BJ (cell line): ENCODE measurements at regions of chr1 and their contacts with region 1.

Region 1: GRCh38 chr1:14945132-14946016 is 208.2 kb upstream of the TMEM51 start:
- DNase-seq: peak; percentile 89
- H3K4me3 ChIP-seq: peak overlapping the region; percentile 31
- H3K27me3 ChIP-seq: no peaks in the 10 kb centered on the region
- CTCF ChIP-seq: no peak

Region 2: DNA sequence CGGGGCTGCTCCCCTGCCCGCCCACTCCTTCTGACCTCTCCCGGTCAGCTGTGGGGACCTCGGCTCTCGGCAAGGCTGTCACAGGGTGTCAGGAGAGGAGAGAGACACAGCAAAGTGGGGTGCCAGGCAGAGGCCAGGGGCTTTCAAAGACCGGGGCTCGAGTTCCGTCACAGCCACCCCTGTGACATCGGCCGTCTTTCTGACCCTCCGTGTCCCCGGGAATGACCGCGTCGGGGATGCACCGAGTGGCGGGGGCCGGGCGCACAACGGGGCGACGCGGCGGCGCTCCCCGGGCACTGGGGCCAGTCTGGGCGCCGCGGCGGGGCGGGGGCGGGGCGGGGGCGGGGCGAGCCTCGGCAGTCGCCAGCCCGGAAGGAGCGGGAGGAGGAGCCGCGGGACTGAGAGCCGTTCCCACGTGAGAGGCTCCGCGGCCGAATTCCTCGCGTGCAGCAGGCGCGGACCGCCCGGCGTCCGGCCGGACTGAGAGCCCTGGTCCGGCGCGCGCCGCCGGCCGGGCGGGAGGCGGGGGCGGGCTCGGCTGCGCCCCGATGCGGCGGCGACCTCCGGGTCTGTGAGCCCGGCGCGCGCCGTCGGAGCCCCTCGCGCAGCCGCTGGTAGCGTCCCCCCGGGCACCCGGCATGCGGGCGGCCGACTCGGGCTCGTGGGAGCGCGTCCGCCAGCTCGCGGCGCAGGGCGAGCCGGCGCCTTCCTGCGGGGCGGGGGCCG is 21.5 kb before region 1 on chr1:
- CTCF ChIA-PET with region 1: no interaction called
- POLR2A ChIA-PET with region 1: interaction called, 10 read pairs
- DNase-seq: no peak
- H3K4me3 ChIP-seq: peak overlapping the region; percentile 75
- H3K27me3 ChIP-seq: no peaks in the 10 kb centered on the region
- CTCF ChIP-seq: no peak